ENCODE measurements at regions of chr12 and their contacts with region 1.

Region 1: DNA sequence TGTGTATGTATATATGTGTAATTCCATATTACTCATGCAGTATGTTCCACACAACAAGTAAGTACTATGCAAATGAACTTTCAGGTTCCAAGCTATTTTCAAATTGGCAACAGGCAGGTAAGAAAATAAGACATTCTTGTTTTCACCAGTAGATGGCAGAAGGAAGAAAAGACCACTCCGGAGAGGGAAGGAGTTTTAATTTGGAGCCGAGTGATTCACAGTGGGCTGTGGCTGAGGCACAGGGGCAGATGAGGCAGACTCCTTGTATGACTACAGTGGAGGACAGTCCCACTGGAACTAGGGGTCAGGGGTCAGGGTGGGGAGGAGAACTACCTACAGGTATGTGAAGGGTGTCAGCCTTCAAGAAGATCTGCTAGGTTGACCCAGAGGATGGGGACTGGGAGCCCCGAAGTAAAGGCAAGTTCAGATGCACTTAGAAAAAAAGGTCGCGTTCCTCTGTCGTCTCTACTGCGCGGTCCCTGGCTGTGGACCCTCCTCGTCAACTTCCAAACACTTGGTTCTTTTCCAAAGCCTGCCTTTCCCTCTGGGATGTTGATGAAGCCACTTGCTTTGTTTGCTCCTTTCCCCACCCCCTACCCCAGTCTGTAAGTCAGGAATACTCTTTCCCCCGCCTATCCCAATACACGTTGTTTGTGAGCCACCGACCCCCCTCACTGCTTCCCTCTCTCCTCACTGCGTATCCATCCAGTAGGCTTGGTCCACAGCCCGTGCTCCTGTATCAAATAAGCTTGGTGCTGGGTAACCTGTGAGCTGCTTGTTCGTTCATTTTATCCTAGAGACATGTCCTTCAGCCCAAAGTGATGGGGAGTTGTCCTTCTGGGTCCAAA is 24.1 kb downstream of the DDX47 start:
- DNase-seq: peak in 1 of 2 experiments; percentile 51
- H3K4me3 ChIP-seq: no peak overlapping the region
- H3K27ac ChIP-seq: no peak overlapping the region
- H3K4me1 ChIP-seq: peaks cover 0 to 2% (median 0%) of the 10 kb centered on the region in 4 experiments; a peak in 2 of 7 replicates
- H3K27me3 ChIP-seq: no peaks in the 10 kb centered on the region
- CTCF ChIP-seq: peak in 2 of 3 experiments; percentile 45 to 65; a peak in 2 of 4 replicates
- EP300 ChIP-seq: no peak
- POLR2A ChIP-seq: no peak
- RAD21 ChIP-seq: peak; percentile 59 to 60

Region 2: DNA sequence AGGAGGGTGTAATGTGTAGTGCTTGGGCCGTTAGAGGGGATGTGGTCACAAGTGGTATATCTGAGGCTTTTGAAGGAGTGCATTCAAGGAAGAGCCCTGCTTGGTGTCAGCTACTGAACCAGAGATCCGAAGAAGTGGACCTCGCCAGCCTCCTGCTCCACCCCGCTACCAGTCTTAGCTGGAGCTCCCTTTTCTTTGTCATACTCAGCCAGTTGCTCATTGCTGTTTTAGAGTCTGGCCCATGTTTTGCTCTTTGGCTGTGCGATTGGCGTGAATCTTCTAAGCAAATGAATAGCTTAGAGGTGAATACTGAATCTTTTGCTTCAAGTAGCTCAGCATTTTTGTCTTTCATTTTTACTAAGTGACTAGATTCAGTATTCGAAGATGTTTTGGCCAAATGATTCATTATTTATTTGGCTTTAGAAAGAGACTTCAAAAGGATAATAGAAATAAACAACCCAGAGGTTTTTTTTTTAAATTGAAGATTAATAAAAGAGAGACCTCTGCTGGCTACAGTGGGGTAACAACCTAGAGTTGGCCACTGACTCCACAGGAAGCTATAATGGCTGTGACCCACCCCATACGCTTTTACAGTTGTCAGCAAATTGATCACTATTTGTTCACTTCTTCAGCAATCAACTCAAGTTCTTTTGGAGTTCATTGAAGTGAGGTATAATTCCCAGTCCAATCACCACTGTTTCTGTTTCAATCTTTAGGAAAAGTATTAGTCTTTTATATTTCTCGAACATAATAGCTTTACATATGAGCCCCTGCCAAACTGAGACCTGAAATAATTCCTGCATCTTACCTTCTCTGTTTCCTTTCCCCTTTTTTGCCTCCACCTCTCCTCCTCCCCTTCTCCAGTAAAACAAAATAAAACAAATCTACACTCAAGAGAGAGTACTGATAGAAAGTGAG is 100.2 kb before region 1 on chr12:
- CTCF ChIA-PET with region 1: no interaction called
- POLR2A ChIA-PET with region 1: no interaction called
- DNase-seq: no peak
- H3K4me3 ChIP-seq: no peak overlapping the region
- H3K27ac ChIP-seq: no peak overlapping the region
- H3K4me1 ChIP-seq: no peaks in the 10 kb centered on the region
- H3K27me3 ChIP-seq: no peaks in the 10 kb centered on the region
- CTCF ChIP-seq: peak; percentile 10 to 33 (median 26); a peak in 3 of 4 replicates
- EP300 ChIP-seq: no peak
- POLR2A ChIP-seq: no peak
- RAD21 ChIP-seq: peak; percentile 34 to 41

Region 3: GRCh38 chr12:12819671-12820311 is 17.5 kb before region 1 on chr12:
- CTCF ChIA-PET with region 1: interaction called, 19 read pairs
- POLR2A ChIA-PET with region 1: interaction called, 3 read pairs
- DNase-seq: no peak
- H3K4me3 ChIP-seq: no peak overlapping the region
- H3K27ac ChIP-seq: no peak overlapping the region
- H3K4me1 ChIP-seq: no peaks in the 10 kb centered on the region
- H3K27me3 ChIP-seq: no peaks in the 10 kb centered on the region
- CTCF ChIP-seq: no peak
- EP300 ChIP-seq: no peak
- POLR2A ChIP-seq: no peak
- RAD21 ChIP-seq: no peak

Region 4: DNA sequence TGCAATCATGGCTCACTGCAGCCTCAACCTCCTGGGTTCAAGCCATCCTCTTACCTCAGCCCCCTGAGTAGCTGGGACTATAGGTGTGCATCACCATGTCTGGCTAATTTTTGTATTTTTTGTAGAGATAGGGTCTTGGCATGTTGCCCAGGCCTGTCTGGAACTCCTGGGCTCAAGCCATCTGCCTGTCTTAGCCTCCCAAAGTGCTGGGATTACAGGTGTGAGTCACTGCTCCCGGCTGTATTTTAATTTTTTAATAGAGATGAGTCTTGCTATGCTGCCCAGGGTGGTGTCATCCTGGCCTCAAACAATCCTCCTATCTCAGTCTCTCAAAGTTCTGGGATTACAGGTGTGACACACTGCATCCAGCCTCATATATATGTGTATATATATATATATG is 22.4 kb after region 1 on chr12:
- CTCF ChIA-PET with region 1: interaction called, 16 read pairs
- POLR2A ChIA-PET with region 1: interaction called, 3 read pairs
- DNase-seq: no peak
- H3K4me3 ChIP-seq: no peak overlapping the region
- H3K27ac ChIP-seq: no peak overlapping the region
- H3K4me1 ChIP-seq: peaks cover 0 to 5% (median 0%) of the 10 kb centered on the region in 4 experiments; a peak in 1 of 7 replicates
- H3K27me3 ChIP-seq: no peaks in the 10 kb centered on the region
- CTCF ChIP-seq: no peak
- EP300 ChIP-seq: no peak
- POLR2A ChIP-seq: no peak
- RAD21 ChIP-seq: no peak

Region 5: GRCh38 chr12:12881151-12881894 is 44.1 kb after region 1 on chr12:
- CTCF ChIA-PET with region 1: interaction called, 19 read pairs
- POLR2A ChIA-PET with region 1: no interaction called
- DNase-seq: no peak
- H3K4me3 ChIP-seq: no peak overlapping the region
- H3K27ac ChIP-seq: no peak overlapping the region
- H3K4me1 ChIP-seq: peaks cover 4 to 11% (median 7%) of the 10 kb centered on the region in 4 experiments; a peak in 5 of 7 replicates
- H3K27me3 ChIP-seq: peaks cover 0 to 7% (median 3%) of the 10 kb centered on the region in 4 experiments; a peak in 3 of 7 replicates
- CTCF ChIP-seq: no peak
- EP300 ChIP-seq: no peak
- POLR2A ChIP-seq: no peak
- RAD21 ChIP-seq: no peak

Region 6: GRCh38 chr12:12899530-12900380 is 62.5 kb after region 1 on chr12:
- CTCF ChIA-PET with region 1: interaction called, 12 read pairs
- POLR2A ChIA-PET with region 1: no interaction called
- DNase-seq: no peak
- H3K4me3 ChIP-seq: no peak overlapping the region
- H3K27ac ChIP-seq: no peak overlapping the region
- H3K4me1 ChIP-seq: no peaks in the 10 kb centered on the region
- H3K27me3 ChIP-seq: no peaks in the 10 kb centered on the region; a peak in 1 of 7 replicates
- CTCF ChIP-seq: no peak
- EP300 ChIP-seq: no peak
- POLR2A ChIP-seq: no peak
- RAD21 ChIP-seq: no peak

Region 7: GRCh38 chr12:12975322-12976077 is 138.3 kb after region 1 on chr12:
- CTCF ChIA-PET with region 1: interaction called, 14 read pairs
- POLR2A ChIA-PET with region 1: no interaction called
- DNase-seq: no peak
- H3K4me3 ChIP-seq: no peak overlapping the region
- H3K27ac ChIP-seq: no peak overlapping the region
- H3K4me1 ChIP-seq: peaks cover 0 to 3% (median 0%) of the 10 kb centered on the region in 4 experiments; a peak in 1 of 7 replicates
- H3K27me3 ChIP-seq: no peaks in the 10 kb centered on the region
- CTCF ChIP-seq: peak; percentile 60 to 80 (median 73)
- EP300 ChIP-seq: no peak
- POLR2A ChIP-seq: no peak
- RAD21 ChIP-seq: peak; percentile 75 to 84